CD8-positive, alpha-beta T cell (primary cell): ENCODE measurements at regions of chr14 and their contacts with region 1.

Region 1: DNA sequence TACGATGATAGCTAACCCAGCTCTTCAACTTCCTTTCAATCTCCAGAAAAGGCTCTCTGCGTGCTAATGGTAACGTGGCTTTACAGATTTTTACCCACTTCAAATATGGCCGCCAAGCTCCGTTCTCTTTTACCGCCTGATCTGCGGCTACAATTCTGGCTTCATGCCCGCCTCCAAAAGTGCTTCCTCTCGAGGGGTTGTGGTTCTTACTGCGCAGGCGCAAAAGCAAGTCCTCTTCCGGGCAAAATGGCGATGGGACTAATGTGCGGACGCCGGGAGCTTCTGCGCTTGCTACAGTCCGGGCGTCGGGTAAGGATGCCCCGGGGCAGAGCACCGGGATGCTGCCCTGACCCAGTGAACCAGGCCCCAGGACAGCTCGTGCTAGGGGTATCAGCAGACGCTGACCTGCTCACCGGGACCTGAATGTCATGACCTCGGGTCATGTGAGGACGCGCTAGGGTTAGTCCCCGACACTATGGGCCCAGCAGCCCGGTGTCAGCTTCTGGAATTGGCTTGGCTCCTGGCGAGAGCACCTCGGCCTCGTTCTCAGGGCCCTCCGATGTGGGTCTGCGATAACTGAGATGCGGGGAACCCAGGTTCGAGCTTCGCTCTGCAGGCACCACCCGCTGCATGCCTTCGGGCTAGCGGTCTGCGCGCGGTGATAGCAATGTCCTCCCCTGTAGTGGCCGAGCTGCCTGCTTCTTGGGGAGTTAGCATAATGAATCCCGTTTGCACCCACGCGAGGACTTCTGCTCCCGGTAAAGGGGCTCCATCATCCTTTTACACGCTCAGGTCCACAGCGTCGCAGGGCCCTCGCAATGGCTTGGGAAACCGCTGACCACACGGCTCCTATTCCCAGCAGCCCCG is at the start of gene OXA1L:
- DNase-seq: peak; percentile 88 to 99 (median 97)
- ATAC-seq: peak; percentile 92
- H3K4me3 ChIP-seq: peak within 1 kb of the TSS; percentile 93 to 99
- H3K4me3 Mint-ChIP-seq: peak within 1 kb of the TSS; percentile 94
- H3K27ac ChIP-seq: peak within 1 kb of the TSS; percentile 84 to 93
- H3K27ac Mint-ChIP-seq: peak within 1 kb of the TSS; percentile 96
- H3K4me1 ChIP-seq: peaks cover 22% of the 10 kb centered on the region
- H3K4me1 Mint-ChIP-seq: peaks cover 34% of the 10 kb centered on the region
- H3K27me3 ChIP-seq: no peaks in the 10 kb centered on the region
- H3K27me3 Mint-ChIP-seq: no peaks in the 10 kb centered on the region
- CTCF ChIP-seq: no peak
- total RNA-seq, gene OXA1L: 186 to 192 TPM

Region 2: DNA sequence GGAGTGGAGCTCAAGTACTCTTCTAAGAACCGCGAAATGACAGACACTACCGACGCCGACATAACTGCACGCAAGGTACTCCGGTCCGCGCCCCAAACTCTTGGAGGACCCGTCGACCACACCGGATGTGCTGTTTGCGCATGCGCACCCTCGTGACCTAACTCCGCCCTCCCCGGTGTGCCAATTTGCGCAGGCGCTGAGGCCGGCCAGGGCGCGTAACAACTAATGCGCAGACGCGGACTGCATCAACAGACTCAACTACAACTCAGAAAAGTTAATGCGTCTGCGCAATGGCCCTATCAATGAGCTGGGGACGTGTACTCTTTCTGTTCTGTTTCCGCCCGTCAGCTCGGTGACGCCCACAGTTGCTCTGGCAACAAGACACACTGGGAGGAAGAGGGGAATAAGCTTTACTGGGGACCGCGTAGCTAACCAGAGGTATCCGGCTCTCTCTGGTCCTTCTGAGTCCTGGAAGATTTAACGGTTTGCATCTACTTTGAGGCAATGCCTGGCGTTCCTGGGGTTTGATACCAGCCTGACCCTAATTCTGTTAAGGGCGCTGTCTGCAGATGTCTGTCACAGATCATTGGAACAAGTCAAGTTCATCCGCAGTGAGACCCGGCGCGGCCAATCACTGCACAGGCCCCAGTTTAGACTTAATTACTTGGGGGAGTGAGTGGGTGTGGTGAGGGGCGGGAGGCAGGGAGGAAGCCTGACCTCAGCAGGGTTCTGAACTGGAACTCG is 177.4 kb before region 1 on chr14 and contains the start of gene DAD1:
- CTCF ChIA-PET with region 1: interaction called, 3 read pairs
- POLR2A ChIA-PET with region 1: interaction called, 8 read pairs
- intact Hi-C with region 1: loop called (anchors 1 kb)
- DNase-seq: peak; percentile 99 to 100 (median 100)
- ATAC-seq: peak; percentile 86
- H3K4me3 ChIP-seq: peak within 1 kb of the TSS; percentile 64 to 67
- H3K4me3 Mint-ChIP-seq: peak within 1 kb of the TSS; percentile 98
- H3K27ac ChIP-seq: peak within 1 kb of the TSS; percentile 95 to 99
- H3K27ac Mint-ChIP-seq: peak within 1 kb of the TSS; percentile 100
- H3K4me1 ChIP-seq: peaks cover 47% of the 10 kb centered on the region
- H3K4me1 Mint-ChIP-seq: peaks cover 49% of the 10 kb centered on the region
- H3K27me3 ChIP-seq: no peaks in the 10 kb centered on the region
- H3K27me3 Mint-ChIP-seq: no peaks in the 10 kb centered on the region
- CTCF ChIP-seq: no peak
- total RNA-seq, gene DAD1: 27.2 to 35.6 TPM

Region 3: DNA sequence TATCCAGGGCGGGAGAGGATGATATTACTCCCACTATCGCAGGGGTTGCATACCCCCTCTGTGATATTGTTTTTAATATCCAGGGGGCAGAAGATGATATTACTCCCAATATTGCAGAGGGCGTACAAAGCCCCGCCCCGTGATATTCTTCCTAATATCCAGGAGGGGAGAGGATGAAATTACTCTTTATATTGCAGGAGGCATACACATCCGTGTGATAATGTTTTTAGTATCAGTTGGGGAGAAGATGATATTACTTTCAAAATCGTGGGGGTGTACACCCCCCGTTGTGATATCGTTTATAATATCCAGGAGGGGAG is 53.1 kb before region 1 on chr14:
- CTCF ChIA-PET with region 1: no interaction called
- POLR2A ChIA-PET with region 1: no interaction called
- intact Hi-C with region 1: loop called (anchors 5 kb)
- DNase-seq: no peak
- ATAC-seq: no peak
- H3K4me3 ChIP-seq: peak overlapping the region; percentile 7 to 49
- H3K4me3 Mint-ChIP-seq: peak overlapping the region; percentile 85
- H3K27ac ChIP-seq: no peak overlapping the region
- H3K27ac Mint-ChIP-seq: no peak overlapping the region
- H3K4me1 ChIP-seq: peaks cover 9% of the 10 kb centered on the region
- H3K4me1 Mint-ChIP-seq: peaks cover 11% of the 10 kb centered on the region
- H3K27me3 ChIP-seq: peaks cover 0 to 7% of the 10 kb centered on the region in 2 experiments
- H3K27me3 Mint-ChIP-seq: peaks cover 31% of the 10 kb centered on the region
- CTCF ChIP-seq: no peak

Region 4: GRCh38 chr14:22872033-22872832 is 105.5 kb after region 1 on chr14:
- CTCF ChIA-PET with region 1: interaction called, 4 read pairs
- POLR2A ChIA-PET with region 1: interaction called, 4 read pairs
- intact Hi-C with region 1: loop called in 1 of 2 experiments (anchors 2 kb)
- DNase-seq: peak; percentile 47 to 82 (median 73)
- ATAC-seq: peak; percentile 46
- H3K4me3 ChIP-seq: peak overlapping the region; percentile 82 to 83
- H3K4me3 Mint-ChIP-seq: peak overlapping the region; percentile 91
- H3K27ac ChIP-seq: peak overlapping the region; percentile 85 to 94
- H3K27ac Mint-ChIP-seq: peak overlapping the region; percentile 99
- H3K4me1 ChIP-seq: peaks cover 28% of the 10 kb centered on the region
- H3K4me1 Mint-ChIP-seq: peaks cover 36% of the 10 kb centered on the region
- H3K27me3 ChIP-seq: no peaks in the 10 kb centered on the region
- H3K27me3 Mint-ChIP-seq: no peaks in the 10 kb centered on the region
- CTCF ChIP-seq: peak; percentile 86

Region 5: DNA sequence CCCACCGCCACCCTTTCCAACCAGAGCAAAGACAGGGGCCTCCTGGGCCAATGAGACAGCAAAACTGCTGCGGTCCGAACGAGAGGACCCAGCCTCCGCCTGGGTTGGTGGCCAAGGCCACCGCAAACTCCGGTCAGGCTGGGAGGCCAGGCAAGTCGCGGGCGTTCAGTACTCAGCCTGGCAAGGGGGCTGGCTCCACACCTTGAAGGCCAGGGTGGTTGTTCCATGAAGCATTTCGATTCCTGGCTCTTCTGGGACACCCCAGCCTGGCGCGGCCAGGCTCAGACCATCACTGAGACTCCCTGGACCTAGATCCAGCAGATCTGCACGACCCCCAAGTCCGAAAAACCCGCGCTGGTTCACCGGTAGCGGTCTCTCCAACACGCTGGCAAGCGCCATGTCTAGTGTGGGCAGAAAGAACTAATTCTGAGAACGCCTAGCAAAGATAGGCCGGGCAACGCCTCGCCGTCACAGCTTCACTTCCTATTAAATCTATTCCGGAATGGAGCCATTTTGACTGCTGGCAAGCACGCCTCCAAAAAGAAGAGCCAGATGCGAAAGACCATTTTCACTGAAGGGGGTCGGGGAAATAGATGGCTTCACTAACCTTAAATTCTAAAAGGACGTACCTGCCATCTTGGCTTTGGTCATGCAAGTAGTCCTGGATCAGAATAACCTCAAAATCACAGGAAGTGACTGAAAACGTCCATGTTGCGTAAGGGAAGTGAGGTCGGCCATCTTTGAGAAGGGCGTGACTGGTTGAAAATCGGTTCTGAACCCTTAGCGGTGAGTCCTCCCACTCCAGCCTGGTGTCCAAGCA is 268.0 kb after region 1 on chr14 and contains the start of gene PSMB5:
- CTCF ChIA-PET with region 1: no interaction called
- POLR2A ChIA-PET with region 1: no interaction called
- intact Hi-C with region 1: loop called (anchors 2 to 10 kb)
- DNase-seq: peak; percentile 74 to 97 (median 87)
- ATAC-seq: peak; percentile 91
- H3K4me3 ChIP-seq: peak within 1 kb of the TSS; percentile 67 to 71
- H3K4me3 Mint-ChIP-seq: peak within 1 kb of the TSS; percentile 90
- H3K27ac ChIP-seq: peak within 1 kb of the TSS; percentile 75 to 97
- H3K27ac Mint-ChIP-seq: peak within 1 kb of the TSS; percentile 98
- H3K4me1 ChIP-seq: peaks cover 21% of the 10 kb centered on the region
- H3K4me1 Mint-ChIP-seq: peaks cover 34% of the 10 kb centered on the region
- H3K27me3 ChIP-seq: no peaks in the 10 kb centered on the region
- H3K27me3 Mint-ChIP-seq: no peaks in the 10 kb centered on the region
- CTCF ChIP-seq: no peak
- total RNA-seq, gene PSMB5: 18.6 to 20.2 TPM

Region 6: GRCh38 chr14:23228812-23229211 is 462.1 kb after region 1 on chr14:
- CTCF ChIA-PET with region 1: no interaction called
- POLR2A ChIA-PET with region 1: no interaction called
- intact Hi-C with region 1: no loop called
- DNase-seq: no peak
- ATAC-seq: no peak
- H3K4me3 ChIP-seq: no peak overlapping the region
- H3K4me3 Mint-ChIP-seq: no peak overlapping the region
- H3K27ac ChIP-seq: no peak overlapping the region
- H3K27ac Mint-ChIP-seq: no peak overlapping the region
- H3K4me1 ChIP-seq: no peaks in the 10 kb centered on the region
- H3K4me1 Mint-ChIP-seq: no peaks in the 10 kb centered on the region
- H3K27me3 ChIP-seq: no peaks in the 10 kb centered on the region
- H3K27me3 Mint-ChIP-seq: peaks cover 2% of the 10 kb centered on the region
- CTCF ChIP-seq: no peak

Region 7: DNA sequence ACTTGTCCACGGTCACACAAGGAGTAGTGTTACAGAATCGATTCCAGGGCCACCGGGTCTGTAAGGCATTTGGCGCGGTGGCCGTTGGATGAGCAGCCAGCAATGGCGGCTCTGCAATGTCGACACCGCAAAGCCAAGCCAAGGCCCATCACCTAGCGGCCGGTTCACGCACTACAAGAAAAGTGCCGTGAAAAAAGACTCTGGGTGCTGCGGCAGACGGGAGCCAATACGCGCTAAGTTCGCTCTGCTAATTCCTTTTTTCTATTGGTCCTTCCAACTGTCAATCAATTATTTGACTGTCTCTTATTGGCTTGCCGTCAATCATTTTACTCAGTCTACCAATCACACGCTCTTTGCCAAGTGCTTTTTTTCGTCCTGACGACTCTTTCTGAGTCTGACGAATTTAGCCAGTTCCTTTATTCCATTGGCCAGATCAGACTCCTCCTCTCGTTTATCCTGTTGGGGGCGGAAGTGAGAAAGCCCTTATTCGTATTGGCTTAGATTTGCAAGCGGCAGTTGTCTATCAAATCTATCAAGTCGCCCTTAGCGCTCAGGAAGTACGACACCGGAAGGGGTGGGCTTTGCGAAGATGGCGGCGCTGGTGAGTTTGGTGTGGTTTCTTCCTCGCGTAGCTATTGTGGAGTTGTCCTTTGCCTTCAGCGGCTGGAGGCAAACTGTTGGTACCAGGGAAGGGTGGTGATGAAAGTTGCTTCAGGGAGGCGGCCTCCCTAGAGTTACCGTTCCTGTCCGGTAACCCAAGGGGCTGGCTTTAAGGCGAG is 702.6 kb after region 1 on chr14 and contains the start of gene NGDN:
- CTCF ChIA-PET with region 1: no interaction called
- POLR2A ChIA-PET with region 1: no interaction called
- intact Hi-C with region 1: loop called in 1 of 2 experiments (anchors 5 kb)
- DNase-seq: peak; percentile 84 to 99 (median 93)
- ATAC-seq: peak; percentile 89
- H3K4me3 ChIP-seq: peak within 1 kb of the TSS; percentile 71 to 83
- H3K4me3 Mint-ChIP-seq: no peak within 1 kb of the TSS
- H3K27ac ChIP-seq: peak within 1 kb of the TSS; percentile 80 to 93
- H3K27ac Mint-ChIP-seq: peak within 1 kb of the TSS; percentile 6
- H3K4me1 ChIP-seq: peaks cover 16% of the 10 kb centered on the region
- H3K4me1 Mint-ChIP-seq: peaks cover 12% of the 10 kb centered on the region
- H3K27me3 ChIP-seq: no peaks in the 10 kb centered on the region
- H3K27me3 Mint-ChIP-seq: no peaks in the 10 kb centered on the region
- CTCF ChIP-seq: peak; percentile 83
- total RNA-seq, gene NGDN: 173 TPM